Calu3 (cell line): ENCODE measurements at regions of chr3 and their contacts with region 1.

Region 1: GRCh38 chr3:87733753-87734367 is 324.9 kb downstream of the CGGBP1 start:
- DNase-seq: peak; percentile 58
- H3K4me3 Mint-ChIP-seq: peak overlapping the region; percentile 74
- H3K27ac Mint-ChIP-seq: peak overlapping the region; percentile 98
- H3K4me1 Mint-ChIP-seq: peaks cover 18% of the 10 kb centered on the region
- H3K27me3 Mint-ChIP-seq: no peaks in the 10 kb centered on the region
- CTCF ChIP-seq: no peak

Region 2: GRCh38 chr3:87350364-87351199 is 383.3 kb before region 1 on chr3:
- CTCF ChIA-PET with region 1: no interaction called
- intact Hi-C with region 1: loop called (anchors 5 kb)
- DNase-seq: no peak
- H3K4me3 Mint-ChIP-seq: no peak overlapping the region
- H3K27ac Mint-ChIP-seq: peak overlapping the region; percentile 79
- H3K4me1 Mint-ChIP-seq: peaks cover 61% of the 10 kb centered on the region
- H3K27me3 Mint-ChIP-seq: no peaks in the 10 kb centered on the region
- CTCF ChIP-seq: peak; percentile 62

Region 3: GRCh38 chr3:87997298-87997697 is 263.4 kb after region 1 on chr3:
- CTCF ChIA-PET with region 1: no interaction called
- intact Hi-C with region 1: loop called (anchors 5 kb)
- DNase-seq: peak; percentile 60
- H3K4me3 Mint-ChIP-seq: no peak overlapping the region
- H3K27ac Mint-ChIP-seq: peak overlapping the region; percentile 2
- H3K4me1 Mint-ChIP-seq: peaks cover 21% of the 10 kb centered on the region
- H3K27me3 Mint-ChIP-seq: no peaks in the 10 kb centered on the region
- CTCF ChIP-seq: no peak